Panc1 (cell line): ENCODE measurements at regions of chr17 and their contacts with region 1.

Region 1: GRCh38 chr17:1402262-1402586 is 2.2 kb upstream of the YWHAE start:
- DNase-seq: no peak
- ATAC-seq: no peak
- H3K4me3 ChIP-seq: no peak overlapping the region
- H3K27ac ChIP-seq: no peak overlapping the region
- H3K4me1 ChIP-seq: peaks cover 8% of the 10 kb centered on the region
- H3K27me3 ChIP-seq: no peaks in the 10 kb centered on the region
- CTCF ChIP-seq: no peak

Region 2: GRCh38 chr17:1286379-1287106 is 115.7 kb before region 1 on chr17:
- CTCF ChIA-PET with region 1: no interaction called
- POLR2A ChIA-PET with region 1: no interaction called
- in situ Hi-C with region 1: no loop called
- intact Hi-C with region 1: no loop called
- DNase-seq: no peak
- ATAC-seq: no peak
- H3K4me3 ChIP-seq: no peak overlapping the region
- H3K27ac ChIP-seq: no peak overlapping the region
- H3K4me1 ChIP-seq: no peaks in the 10 kb centered on the region
- H3K27me3 ChIP-seq: no peaks in the 10 kb centered on the region
- CTCF ChIP-seq: no peak

Region 3: DNA sequence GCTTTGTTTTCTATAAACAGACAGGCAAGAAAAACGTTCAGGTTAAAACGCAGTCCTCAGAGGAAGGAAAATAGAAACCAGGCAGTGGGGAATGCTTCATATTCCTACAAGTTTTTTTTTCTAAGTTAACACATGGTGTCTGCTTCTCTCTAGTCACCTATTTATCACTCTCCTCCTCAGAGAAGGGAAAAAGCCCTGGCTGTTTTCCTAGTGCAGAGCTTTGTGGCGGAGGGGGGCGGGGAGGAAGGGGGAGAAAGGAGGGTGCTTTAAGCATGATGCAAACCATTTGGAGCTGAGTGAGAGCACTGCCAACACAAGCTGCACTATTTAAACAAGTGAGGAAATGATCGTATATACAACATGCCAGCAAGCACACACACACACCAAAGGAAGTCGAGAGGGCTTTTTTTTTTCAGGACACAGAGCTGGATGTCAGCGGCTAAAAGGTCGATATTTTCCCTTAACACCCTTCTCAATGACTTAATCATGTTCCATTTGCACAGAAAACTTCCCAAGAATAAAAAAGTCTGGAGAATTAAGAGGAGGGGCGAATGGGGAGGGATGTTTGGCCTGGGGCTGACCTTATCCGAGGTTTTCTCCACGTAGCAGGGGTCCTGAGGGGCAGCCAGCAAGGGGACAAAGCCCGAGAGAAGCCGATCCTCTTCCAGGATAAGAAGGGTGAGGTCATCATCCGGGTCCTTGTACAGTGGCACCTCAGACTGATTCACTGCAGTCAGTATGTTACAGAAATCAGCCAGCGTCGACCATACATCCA is 770.0 kb after region 1 on chr17:
- CTCF ChIA-PET with region 1: no interaction called
- POLR2A ChIA-PET with region 1: interaction called, 17 read pairs
- in situ Hi-C with region 1: no loop called
- intact Hi-C with region 1: no loop called
- DNase-seq: no peak
- ATAC-seq: no peak
- H3K4me3 ChIP-seq: no peak overlapping the region
- H3K27ac ChIP-seq: no peak overlapping the region
- H3K4me1 ChIP-seq: no peaks in the 10 kb centered on the region
- H3K27me3 ChIP-seq: no peaks in the 10 kb centered on the region
- CTCF ChIP-seq: no peak